CD8-positive, alpha-beta T cell (primary cell): ENCODE measurements at regions of chr12 and their contacts with region 1.

Region 1: GRCh38 chr12:71840231-71840847 is 780 bp downstream of the TBC1D15 start:
- DNase-seq: peak in 3 of 9 experiments; percentile 8 to 39 (median 18)
- ATAC-seq: peak; percentile 21
- H3K4me3 ChIP-seq: peak overlapping the region; percentile 64 to 79
- H3K4me3 Mint-ChIP-seq: peak overlapping the region; percentile 92
- H3K27ac ChIP-seq: peak overlapping the region; percentile 93 to 98
- H3K27ac Mint-ChIP-seq: peak overlapping the region; percentile 98
- H3K4me1 ChIP-seq: peaks cover 32% of the 10 kb centered on the region
- H3K4me1 Mint-ChIP-seq: peaks cover 46% of the 10 kb centered on the region
- H3K27me3 ChIP-seq: no peaks in the 10 kb centered on the region
- H3K27me3 Mint-ChIP-seq: no peaks in the 10 kb centered on the region
- CTCF ChIP-seq: no peak

Region 2: DNA sequence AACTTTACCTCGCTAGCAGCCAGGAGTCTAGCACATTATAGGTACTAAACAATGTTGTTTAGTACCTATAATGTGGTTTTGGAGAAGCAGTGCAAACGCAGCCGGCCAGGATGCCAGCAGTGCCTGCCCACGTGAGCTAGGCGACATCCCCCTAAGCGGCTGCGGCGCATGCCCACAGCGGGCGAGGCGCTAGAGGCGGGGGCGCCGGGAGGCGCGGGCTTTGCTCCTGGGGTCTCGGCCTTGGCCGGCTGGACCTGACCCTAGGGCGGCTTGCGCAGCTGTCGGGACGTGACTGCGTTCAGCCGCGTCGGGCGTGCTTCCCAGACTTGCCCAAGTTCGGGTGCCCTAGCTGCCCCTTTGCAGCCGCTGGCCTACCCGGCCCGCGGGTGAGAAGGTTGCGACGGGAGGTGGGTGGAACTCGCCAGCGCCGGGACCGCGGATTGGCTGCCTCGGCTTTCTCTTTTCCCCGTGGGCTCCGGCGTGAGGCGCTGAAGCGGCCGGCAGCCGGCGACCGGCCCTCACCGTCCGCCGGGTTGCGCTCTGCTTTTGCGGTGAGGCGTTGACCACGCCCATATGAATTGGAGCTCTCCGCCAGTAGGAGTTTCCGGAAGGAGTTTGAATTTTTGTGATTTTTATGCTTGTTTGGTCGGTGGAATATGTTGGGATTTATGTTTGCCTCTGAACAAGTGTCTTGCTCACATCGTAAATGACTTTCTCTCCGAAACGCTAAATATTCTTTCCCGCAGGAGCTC is 154.2 kb before region 1 on chr12 and contains the start of gene TMEM19:
- CTCF ChIA-PET with region 1: no interaction called
- POLR2A ChIA-PET with region 1: interaction called, 24 read pairs
- intact Hi-C with region 1: loop called (anchors 5 kb)
- DNase-seq: peak; percentile 65 to 92 (median 83)
- ATAC-seq: peak; percentile 88
- H3K4me3 ChIP-seq: peak within 1 kb of the TSS; percentile 66 to 95
- H3K4me3 Mint-ChIP-seq: peak within 1 kb of the TSS; percentile 96
- H3K27ac ChIP-seq: peak within 1 kb of the TSS; percentile 71 to 74
- H3K27ac Mint-ChIP-seq: peak within 1 kb of the TSS; percentile 94
- H3K4me1 ChIP-seq: peaks cover 33% of the 10 kb centered on the region
- H3K4me1 Mint-ChIP-seq: peaks cover 45% of the 10 kb centered on the region
- H3K27me3 ChIP-seq: no peaks in the 10 kb centered on the region
- H3K27me3 Mint-ChIP-seq: no peaks in the 10 kb centered on the region
- CTCF ChIP-seq: no peak
- total RNA-seq, gene TMEM19: 8.8 to 10.0 TPM

Region 3: DNA sequence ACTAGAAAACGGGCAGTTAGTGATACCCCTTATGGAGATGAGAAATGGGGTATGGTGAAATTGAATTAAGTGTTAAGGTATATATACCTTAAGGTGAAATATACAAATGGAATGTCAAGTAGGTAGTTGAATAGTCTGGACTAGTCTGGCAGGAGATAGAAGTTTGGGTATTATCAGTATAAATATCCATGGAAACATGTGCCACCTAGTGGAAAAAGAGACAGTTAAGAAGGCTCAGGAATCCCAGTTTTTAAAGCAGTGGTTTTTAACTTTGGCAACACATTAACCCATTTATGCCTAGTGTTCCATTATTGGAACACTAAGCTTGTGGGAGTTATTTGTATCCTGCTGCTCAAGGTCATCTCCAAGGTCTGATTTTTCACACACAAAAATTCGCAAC is 59.8 kb after region 1 on chr12:
- CTCF ChIA-PET with region 1: no interaction called
- POLR2A ChIA-PET with region 1: no interaction called
- intact Hi-C with region 1: loop called in 1 of 2 experiments (anchors 2 kb)
- DNase-seq: no peak
- ATAC-seq: no peak
- H3K4me3 ChIP-seq: no peak overlapping the region
- H3K4me3 Mint-ChIP-seq: no peak overlapping the region
- H3K27ac ChIP-seq: no peak overlapping the region
- H3K27ac Mint-ChIP-seq: no peak overlapping the region
- H3K4me1 ChIP-seq: no peaks in the 10 kb centered on the region
- H3K4me1 Mint-ChIP-seq: no peaks in the 10 kb centered on the region
- H3K27me3 ChIP-seq: no peaks in the 10 kb centered on the region
- H3K27me3 Mint-ChIP-seq: no peaks in the 10 kb centered on the region
- CTCF ChIP-seq: no peak